ENCODE measurements at regions of chr15 and their contacts with region 1.

Region 1: DNA sequence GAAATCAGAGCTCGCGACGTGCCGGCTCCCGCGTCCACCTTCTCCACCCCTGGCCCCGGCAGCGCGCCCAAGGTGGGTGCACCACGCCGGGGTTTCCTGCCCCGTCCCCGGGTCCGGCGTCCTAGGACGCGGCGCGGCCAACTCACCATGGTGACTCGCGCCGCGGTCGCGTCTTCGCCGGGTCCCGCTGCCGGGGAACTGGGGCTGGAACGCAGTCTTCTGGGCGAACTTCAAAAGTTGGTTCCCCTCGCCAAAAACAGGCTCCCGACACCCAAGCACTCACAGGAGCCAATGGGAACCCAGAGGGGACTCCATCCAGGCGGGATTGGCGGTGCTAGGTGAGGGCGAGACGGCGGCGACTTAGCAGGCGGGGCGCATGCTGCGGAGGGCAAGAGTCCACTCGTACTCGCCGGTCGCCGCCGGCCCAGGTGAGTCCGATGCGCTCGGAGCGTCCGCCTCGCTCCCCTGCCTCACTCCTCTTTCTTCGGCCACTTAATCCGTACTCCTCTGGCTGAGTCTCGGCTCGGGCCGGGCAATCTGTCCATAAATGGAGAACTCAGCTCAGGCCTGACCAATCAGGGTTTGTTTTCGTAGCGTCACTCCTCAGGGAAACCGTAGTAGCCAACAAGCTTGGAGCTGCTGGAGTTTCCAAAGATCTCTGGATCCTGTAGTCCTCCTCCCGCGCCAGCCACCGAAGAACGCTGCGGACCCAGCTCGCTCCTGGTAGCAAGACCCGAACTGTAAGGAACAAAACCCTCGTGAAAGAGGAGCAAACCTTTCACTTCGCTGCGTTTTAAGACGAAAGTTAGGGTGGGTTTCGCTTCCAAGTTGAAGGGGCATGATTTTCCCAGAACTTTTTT is at the start of gene MYO1E:
- H3K4me3 Mint-ChIP-seq: peak within 1 kb of the TSS; percentile 91
- H3K27ac Mint-ChIP-seq: peak within 1 kb of the TSS; percentile 96
- H3K4me1 Mint-ChIP-seq: peaks cover 44% of the 10 kb centered on the region
- H3K27me3 Mint-ChIP-seq: no peaks in the 10 kb centered on the region

Region 2: DNA sequence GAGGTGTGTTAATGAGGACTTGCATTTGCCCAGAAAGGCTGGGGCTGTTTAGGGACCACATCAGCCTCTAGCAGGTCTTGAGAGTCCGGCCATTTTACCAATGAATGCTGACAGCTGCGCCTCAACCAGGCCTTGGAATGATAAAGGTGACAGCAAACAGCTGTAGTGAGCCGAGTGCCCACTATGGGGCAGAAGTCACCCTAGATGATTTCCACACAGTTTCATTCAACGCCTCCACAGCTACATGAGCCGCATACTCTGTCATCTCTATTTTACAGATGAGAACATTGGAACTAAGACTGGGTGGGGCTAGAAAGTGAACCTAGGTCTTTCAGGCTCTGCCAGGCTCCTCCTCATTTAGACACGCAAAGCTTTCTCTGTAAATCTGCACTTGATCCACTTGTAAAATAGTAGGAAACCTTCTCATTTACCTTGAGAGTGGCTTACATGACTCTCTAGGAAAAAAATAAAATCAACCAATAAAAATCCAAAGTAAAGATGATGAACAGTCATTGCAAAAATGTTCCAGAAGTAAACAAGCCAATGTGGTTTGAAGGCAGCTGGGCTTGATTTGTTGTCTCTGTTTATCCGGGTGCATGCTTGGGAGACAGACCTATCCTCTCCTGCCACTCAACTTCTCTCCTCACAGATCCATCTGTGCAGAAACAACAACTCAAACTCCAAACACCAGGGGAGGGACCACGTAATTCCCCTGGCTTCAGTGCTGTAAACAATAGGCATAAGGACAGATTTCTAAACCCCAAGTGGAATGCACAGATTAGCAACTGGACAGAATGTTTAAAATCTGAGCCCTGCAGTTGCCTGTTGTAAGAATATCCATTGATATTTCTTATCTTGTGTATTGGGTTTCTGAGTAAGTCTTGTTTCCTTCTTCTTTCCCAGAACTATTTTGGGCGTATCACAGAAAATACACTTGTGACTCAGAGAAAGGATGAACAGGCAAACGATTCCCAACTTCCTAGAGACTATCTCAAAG is 197.4 kb before region 1 on chr15:
- intact Hi-C with region 1: loop called (anchors 10 kb)
- H3K4me3 Mint-ChIP-seq: peak overlapping the region; percentile 57
- H3K27ac Mint-ChIP-seq: peak overlapping the region; percentile 99
- H3K4me1 Mint-ChIP-seq: peaks cover 84% of the 10 kb centered on the region
- H3K27me3 Mint-ChIP-seq: no peaks in the 10 kb centered on the region

Region 3: DNA sequence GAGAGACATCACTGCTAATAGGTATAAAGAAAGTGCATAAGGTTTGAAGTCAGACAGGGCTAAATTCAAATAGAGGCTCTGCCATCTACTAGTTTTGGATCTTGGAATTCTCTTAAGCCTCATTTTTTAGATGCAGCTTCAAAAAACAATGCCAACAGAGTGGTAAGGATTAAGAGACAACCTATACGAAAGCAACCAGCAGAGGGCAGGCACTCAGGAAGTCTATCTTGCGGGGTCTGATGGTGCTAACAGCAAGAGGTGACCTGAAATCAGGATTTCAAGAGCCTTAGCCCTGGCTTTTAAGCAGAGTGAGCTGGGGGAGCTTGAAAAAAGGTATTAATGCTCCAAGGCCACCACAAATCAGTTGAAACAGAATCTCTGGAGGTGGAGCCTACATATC is 125.2 kb before region 1 on chr15:
- intact Hi-C with region 1: loop called (anchors 10 kb)
- H3K4me3 Mint-ChIP-seq: no peak overlapping the region
- H3K27ac Mint-ChIP-seq: no peak overlapping the region
- H3K4me1 Mint-ChIP-seq: peaks cover 5% of the 10 kb centered on the region
- H3K27me3 Mint-ChIP-seq: no peaks in the 10 kb centered on the region

Region 4: GRCh38 chr15:59299929-59300617 is 72.5 kb before region 1 on chr15:
- intact Hi-C with region 1: loop called (anchors 5 kb)
- H3K4me3 Mint-ChIP-seq: peak overlapping the region; percentile 51
- H3K27ac Mint-ChIP-seq: peak overlapping the region; percentile 87
- H3K4me1 Mint-ChIP-seq: peaks cover 63% of the 10 kb centered on the region
- H3K27me3 Mint-ChIP-seq: no peaks in the 10 kb centered on the region

Region 5: GRCh38 chr15:59406446-59406845 is 33.9 kb after region 1 on chr15:
- intact Hi-C with region 1: loop called (anchors 5 kb)
- H3K4me3 Mint-ChIP-seq: peak overlapping the region; percentile 52
- H3K27ac Mint-ChIP-seq: peak overlapping the region; percentile 25
- H3K4me1 Mint-ChIP-seq: peaks cover 85% of the 10 kb centered on the region
- H3K27me3 Mint-ChIP-seq: no peaks in the 10 kb centered on the region

Region 6: GRCh38 chr15:59424616-59425015 is 52.0 kb after region 1 on chr15:
- intact Hi-C with region 1: no loop called
- H3K4me3 Mint-ChIP-seq: no peak overlapping the region
- H3K27ac Mint-ChIP-seq: no peak overlapping the region
- H3K4me1 Mint-ChIP-seq: peaks cover 22% of the 10 kb centered on the region
- H3K27me3 Mint-ChIP-seq: peaks cover 24% of the 10 kb centered on the region

Region 7: GRCh38 chr15:59492389-59493377 is 120.1 kb after region 1 on chr15:
- intact Hi-C with region 1: loop called (anchors 2 kb)
- H3K4me3 Mint-ChIP-seq: no peak overlapping the region
- H3K27ac Mint-ChIP-seq: no peak overlapping the region
- H3K4me1 Mint-ChIP-seq: peaks cover 6% of the 10 kb centered on the region
- H3K27me3 Mint-ChIP-seq: peaks cover 1% of the 10 kb centered on the region

Measured in dendritic cell treated with granulocyte-macrophage colony-stimulating factor and Interleukin-4, amounts not matched to agents 40 ng/mL and 50 ng/mL, for 4 days (primary cell).